ENCODE measurements at regions of chr11 and their contacts with region 1.

Region 1: GRCh38 chr11:506238-506994 is 626 bp downstream of the RNH1 start:
- DNase-seq: peak; percentile 99
- ATAC-seq: peak; percentile 78
- H3K4me3 Mint-ChIP-seq: peak overlapping the region; percentile 93
- H3K27ac Mint-ChIP-seq: peak overlapping the region; percentile 99
- H3K4me1 Mint-ChIP-seq: peaks cover 22% of the 10 kb centered on the region
- H3K27me3 Mint-ChIP-seq: no peaks in the 10 kb centered on the region

Region 2: DNA sequence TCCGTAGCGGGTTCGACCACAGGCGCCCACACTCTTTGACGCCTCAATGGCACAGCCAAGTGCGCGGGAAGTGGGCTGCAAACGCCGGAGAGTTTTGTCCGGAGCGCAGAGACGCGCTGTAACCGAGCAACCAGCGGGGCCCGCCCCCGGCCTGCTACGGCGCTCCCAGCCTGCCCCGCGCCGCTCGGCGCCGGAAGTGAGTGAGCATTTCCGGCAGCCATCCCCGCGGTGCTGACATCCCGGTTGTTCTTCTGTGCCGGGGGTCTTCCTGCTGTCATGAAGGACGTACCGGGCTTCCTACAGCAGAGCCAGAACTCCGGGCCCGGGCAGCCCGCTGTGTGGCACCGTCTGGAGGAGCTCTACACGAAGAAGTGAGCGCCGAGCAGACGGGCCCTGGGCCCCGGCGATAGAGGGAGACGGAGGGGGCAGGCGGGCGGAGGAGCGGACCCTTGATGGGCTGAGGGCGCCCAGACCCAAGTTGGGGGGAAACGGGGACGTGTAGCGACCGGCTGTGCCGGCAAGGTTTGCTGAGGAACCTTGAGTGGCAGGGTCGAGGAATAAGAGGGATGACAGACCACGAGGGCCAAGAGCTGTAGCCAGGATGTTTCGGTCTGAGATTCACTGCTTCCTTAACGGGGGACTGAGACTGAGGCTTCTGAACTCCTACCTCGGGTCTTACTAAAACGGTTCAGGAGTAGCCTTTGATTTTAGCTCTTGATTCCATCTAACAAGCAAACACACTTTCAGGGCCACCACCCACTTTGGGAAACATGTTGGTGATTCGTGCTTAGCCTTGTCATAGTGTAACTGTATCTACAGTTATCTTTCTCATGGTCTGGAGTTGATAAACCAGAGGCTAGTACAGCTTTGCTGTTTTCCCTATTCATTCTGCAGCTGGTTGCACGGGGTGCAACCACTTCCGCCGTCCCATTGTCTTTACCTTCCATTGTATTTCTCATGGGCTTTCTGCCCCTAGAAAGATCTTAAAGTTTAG is 269.3 kb before region 1 on chr11 and contains the start of gene PSMD13:
- CTCF ChIA-PET with region 1: no interaction called
- POLR2A ChIA-PET with region 1: no interaction called
- intact Hi-C with region 1: loop called in 1 of 2 experiments (anchors 1 kb)
- DNase-seq: peak; percentile 96
- ATAC-seq: peak; percentile 86
- H3K4me3 Mint-ChIP-seq: peak within 1 kb of the TSS; percentile 92
- H3K27ac Mint-ChIP-seq: peak within 1 kb of the TSS; percentile 99
- H3K4me1 Mint-ChIP-seq: peaks cover 48% of the 10 kb centered on the region
- H3K27me3 Mint-ChIP-seq: no peaks in the 10 kb centered on the region
- total RNA-seq, gene PSMD13: 134 to 212 TPM

Region 3: DNA sequence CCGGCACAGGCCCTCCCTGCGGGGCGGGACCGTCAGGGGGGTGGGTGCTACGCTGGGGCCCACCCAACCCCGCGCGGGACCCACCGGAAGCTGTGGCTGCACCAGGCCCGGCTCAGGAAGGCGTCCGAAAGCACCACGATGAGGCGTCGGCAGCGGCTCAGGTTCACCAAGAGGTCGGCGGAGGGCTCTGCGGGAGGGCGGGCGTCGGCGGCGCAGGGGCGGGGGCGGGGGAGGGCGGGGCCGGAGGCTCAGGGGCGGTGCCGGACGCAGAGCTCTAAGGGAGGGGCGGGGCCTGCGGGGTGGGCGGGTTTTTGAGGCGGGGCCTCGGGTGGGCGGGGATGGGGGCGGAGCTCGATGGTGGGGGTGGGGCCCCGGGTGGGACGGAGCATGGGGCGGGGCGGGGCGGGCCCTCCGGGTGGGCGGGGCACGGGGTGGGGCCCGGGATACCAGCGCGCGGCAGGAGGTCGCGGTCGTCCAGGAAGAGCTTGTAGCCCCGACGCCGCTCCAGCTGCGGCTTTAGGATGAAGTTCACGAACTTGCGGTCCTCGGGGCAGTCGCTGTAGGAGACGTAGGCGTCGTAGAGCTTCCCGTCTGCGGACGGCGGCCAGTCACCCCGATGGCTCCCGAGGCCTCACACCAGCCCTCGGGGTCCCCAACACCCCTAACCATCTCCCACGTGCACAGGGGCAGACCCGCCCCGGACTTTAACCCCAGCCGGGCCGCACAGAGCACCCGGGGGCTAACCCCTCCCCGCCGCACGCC is 99.3 kb before region 1 on chr11:
- CTCF ChIA-PET with region 1: no interaction called
- POLR2A ChIA-PET with region 1: no interaction called
- intact Hi-C with region 1: loop called in 1 of 2 experiments (anchors 1 kb)
- DNase-seq: peak; percentile 93
- ATAC-seq: peak; percentile 90
- H3K4me3 Mint-ChIP-seq: no peak overlapping the region
- H3K27ac Mint-ChIP-seq: no peak overlapping the region
- H3K4me1 Mint-ChIP-seq: peaks cover 5% of the 10 kb centered on the region
- H3K27me3 Mint-ChIP-seq: no peaks in the 10 kb centered on the region

Region 4: DNA sequence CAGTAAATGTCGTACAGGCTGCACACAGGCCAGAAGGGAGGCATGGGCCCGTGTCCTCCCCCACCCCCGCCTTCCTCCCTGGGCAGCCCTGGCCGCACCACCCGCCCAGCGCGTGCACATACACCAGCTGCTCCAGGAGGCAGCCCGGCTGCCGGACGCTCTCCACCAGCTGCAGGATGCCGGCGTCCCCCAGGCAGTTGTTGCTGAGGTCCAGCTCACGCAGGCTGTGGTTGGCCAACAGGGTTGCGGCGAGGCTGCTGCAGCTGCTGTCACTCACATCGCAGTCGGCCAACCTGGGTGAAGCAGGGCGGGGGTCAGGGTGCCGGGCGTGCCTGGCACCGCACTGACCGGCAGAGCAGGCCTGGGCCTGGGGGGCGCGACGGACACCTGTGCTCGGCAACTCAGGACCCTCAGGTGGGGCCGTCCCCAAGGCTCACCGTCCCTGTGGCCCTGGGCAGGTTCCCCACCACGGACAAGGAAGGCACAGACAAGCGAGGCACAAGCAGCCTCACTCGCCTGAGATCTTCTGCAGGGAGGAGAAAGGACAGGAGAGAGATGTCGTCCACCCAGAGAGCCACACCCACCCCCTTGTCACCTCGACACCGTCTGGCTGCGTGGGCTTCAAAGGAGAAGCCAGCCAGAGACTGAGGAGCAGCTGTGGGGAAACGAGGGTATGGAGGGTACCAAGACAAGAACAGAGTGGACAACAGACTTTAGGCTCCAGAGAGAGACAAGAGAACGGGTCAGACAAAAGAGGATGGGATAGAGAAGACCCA is 11.5 kb before region 1 on chr11:
- CTCF ChIA-PET with region 1: no interaction called
- POLR2A ChIA-PET with region 1: no interaction called
- intact Hi-C with region 1: no loop called
- DNase-seq: no peak
- ATAC-seq: no peak
- H3K4me3 Mint-ChIP-seq: no peak overlapping the region
- H3K27ac Mint-ChIP-seq: no peak overlapping the region
- H3K4me1 Mint-ChIP-seq: no peaks in the 10 kb centered on the region
- H3K27me3 Mint-ChIP-seq: no peaks in the 10 kb centered on the region

Region 5: GRCh38 chr11:535519-536454 is 29.4 kb after region 1 on chr11 and contains the start of gene HRAS:
- CTCF ChIA-PET with region 1: no interaction called
- POLR2A ChIA-PET with region 1: interaction called, 5 read pairs
- intact Hi-C with region 1: loop called (anchors 1 kb)
- DNase-seq: peak; percentile 98
- ATAC-seq: peak; percentile 93
- H3K4me3 Mint-ChIP-seq: peak within 1 kb of the TSS; percentile 79
- H3K27ac Mint-ChIP-seq: peak within 1 kb of the TSS; percentile 81
- H3K4me1 Mint-ChIP-seq: peaks cover 17% of the 10 kb centered on the region
- H3K27me3 Mint-ChIP-seq: no peaks in the 10 kb centered on the region
- total RNA-seq, gene HRAS: 26.8 to 41.9 TPM

Region 6: DNA sequence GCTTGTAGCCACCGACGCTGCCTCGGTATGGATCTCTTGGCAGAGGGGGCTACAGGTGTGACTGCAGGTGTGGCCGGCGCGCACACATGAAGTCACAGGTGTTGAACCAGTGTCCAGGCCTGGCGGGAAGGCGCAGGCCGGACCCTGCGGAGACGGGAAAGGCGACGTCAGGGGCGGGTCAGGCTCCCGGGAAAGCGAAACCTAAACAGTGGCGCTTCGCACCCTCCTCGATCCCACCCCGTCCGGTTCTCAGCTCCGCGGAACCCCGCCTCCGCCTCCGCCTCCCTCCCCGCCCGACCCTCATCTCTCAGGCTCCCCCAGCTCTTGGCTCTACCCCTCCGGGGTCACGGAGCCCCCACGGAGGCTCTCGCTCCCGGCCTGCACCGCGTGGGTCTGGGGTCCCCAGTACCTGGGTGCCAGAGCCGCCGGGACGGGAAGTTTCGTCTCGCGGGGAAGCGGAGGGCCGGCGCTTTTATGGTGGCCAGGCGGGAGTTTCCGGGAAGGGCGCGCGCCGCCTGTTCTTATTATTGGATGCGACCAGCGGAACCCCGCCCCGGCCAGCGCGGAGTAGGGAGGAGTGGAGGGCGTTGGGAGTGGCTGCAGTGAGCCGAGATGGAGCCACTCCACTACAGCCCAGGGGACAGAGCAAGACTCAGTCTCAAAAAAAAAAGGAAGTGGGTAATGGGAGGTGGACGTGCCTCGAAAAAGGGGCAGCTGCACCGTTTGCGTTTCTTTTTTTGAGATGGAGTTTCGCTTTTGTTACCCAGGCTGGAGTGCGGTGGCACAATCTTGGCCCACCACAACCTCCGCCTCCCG is 109.3 kb after region 1 on chr11 and contains the start of gene IRF7:
- CTCF ChIA-PET with region 1: no interaction called
- POLR2A ChIA-PET with region 1: no interaction called
- intact Hi-C with region 1: loop called in 1 of 2 experiments (anchors 1 kb)
- DNase-seq: peak; percentile 93
- ATAC-seq: peak; percentile 81
- H3K4me3 Mint-ChIP-seq: peak within 1 kb of the TSS; percentile 85
- H3K27ac Mint-ChIP-seq: peak within 1 kb of the TSS; percentile 95
- H3K4me1 Mint-ChIP-seq: peaks cover 13% of the 10 kb centered on the region
- H3K27me3 Mint-ChIP-seq: no peaks in the 10 kb centered on the region
- total RNA-seq, gene IRF7: 57.1 to 62.6 TPM

Region 7: DNA sequence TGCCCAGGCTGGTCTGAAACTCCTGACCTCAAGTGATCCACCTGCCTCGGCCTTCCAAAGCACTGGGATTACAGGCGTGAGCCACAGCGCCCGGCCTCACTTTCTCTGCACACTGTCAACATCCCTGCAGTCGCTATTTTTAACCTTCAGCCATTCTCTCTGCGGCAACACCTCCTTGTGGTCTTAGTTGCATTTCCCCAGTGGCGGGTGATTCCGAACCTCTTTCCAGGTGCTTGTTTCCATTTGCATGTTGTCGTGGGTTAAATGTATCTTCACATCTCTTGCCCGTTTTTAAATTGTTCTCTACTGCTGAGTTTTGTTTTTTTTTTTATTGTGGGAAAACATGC is 122.8 kb after region 1 on chr11:
- CTCF ChIA-PET with region 1: no interaction called
- POLR2A ChIA-PET with region 1: no interaction called
- intact Hi-C with region 1: no loop called
- DNase-seq: peak; percentile 51
- ATAC-seq: peak; percentile 66
- H3K4me3 Mint-ChIP-seq: peak overlapping the region; percentile 32
- H3K27ac Mint-ChIP-seq: peak overlapping the region; percentile 53
- H3K4me1 Mint-ChIP-seq: peaks cover 22% of the 10 kb centered on the region
- H3K27me3 Mint-ChIP-seq: peaks cover 25% of the 10 kb centered on the region

Region 8: DNA sequence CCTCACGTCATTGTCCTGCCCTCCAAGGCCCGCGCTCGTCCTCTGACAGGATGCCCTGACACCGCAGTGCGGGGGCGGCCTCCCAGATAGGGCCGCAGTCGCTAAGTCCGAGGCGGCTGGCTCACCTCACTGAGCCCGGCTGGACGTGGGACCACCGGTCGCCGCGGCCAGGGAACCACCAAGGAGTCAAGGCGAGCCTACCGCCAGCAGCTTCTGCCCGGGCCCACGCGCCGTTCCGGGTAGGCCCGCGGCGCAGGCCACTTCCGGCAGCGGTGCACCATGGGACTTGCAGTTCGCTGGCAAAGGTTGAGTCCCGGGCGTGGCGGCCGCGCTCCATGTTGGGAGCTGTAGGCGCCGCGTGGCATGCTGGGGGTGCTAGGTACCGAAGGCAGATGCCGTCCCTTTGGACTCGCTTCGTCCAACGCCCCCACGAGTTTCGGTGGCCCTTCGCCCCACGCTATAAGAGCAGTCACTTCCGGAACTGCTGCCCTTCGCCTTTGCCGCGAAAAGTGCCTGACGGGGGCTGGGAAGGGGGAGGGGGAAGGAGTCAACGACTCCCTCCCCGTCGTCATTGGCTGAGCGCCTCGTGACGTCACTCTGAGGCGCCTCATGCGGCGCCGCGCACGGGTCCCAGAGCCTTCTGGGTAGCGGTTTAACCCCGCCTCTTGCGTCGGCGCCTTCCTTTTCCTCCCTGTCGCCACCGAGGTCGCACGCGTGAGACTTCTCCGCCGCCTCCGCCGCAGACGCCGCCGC is 303.0 kb after region 1 on chr11 and contains the start of gene RPLP2:
- CTCF ChIA-PET with region 1: no interaction called
- POLR2A ChIA-PET with region 1: no interaction called
- intact Hi-C with region 1: loop called in 1 of 2 experiments (anchors 1 kb)
- DNase-seq: peak; percentile 99
- ATAC-seq: peak; percentile 86
- H3K4me3 Mint-ChIP-seq: peak within 1 kb of the TSS; percentile 94
- H3K27ac Mint-ChIP-seq: peak within 1 kb of the TSS; percentile 97
- H3K4me1 Mint-ChIP-seq: peaks cover 30% of the 10 kb centered on the region
- H3K27me3 Mint-ChIP-seq: no peaks in the 10 kb centered on the region
- total RNA-seq, gene RPLP2: 2,132 to 3,230 TPM